HEK293T (cell line): ENCODE measurements at regions of chr20 and their contacts with region 1.

Region 1: GRCh38 chr20:60888771-60889170 is 363.3 kb upstream of the CDH4 start:
- DNase-seq: no peak

Region 2: DNA sequence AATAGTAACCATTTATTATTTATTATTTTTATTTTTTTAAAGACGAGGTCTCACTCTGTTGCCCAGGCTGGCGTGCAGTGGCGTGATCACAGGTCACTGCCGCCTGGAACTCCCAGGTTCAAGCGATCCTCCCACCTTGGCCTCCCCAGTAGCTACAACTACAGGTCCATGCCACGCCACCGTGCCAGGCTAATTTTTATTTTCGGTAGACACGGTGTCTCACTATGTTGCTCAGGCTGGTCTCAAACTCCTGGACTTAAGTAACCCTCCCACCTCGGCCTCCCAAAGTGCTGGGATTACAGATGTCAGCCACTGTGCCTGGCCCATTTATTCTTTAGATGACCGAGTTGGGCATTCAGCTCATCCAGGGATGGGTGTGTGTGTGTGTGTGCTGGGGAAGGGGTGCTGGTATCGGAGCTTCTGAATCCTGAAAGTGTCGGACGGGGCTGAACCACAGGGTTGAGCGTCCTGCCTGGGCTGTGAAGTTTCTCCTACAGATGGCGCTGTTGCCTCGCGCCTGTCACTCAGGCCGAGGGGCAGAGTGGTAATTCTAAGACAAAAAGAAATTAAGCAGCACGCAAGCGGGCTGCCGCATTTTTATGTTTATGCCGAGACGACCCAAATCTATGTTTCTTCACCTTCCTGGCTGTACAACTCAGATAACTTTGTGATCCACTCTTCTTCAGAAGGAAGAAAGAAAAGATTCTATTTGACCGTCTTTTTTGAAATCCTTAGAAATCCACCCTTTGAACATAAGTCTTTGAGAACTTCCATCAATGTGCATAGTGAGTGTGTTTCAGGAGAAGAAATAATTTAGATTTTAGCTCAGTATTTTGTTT is 677.8 kb before region 1 on chr20:
- CTCF ChIA-PET with region 1: interaction called, 11 read pairs
- POLR2A ChIA-PET with region 1: no interaction called
- DNase-seq: peak; percentile 79

Region 3: GRCh38 chr20:60903325-60903971 is 14.7 kb after region 1 on chr20:
- CTCF ChIA-PET with region 1: no interaction called
- POLR2A ChIA-PET with region 1: no interaction called
- DNase-seq: no peak

Region 4: GRCh38 chr20:60950561-60950960 is 61.8 kb after region 1 on chr20:
- CTCF ChIA-PET with region 1: no interaction called
- POLR2A ChIA-PET with region 1: no interaction called
- DNase-seq: no peak